IMR-90 (cell line): ENCODE measurements at regions of chr3 and their contacts with region 1.

Region 1: DNA sequence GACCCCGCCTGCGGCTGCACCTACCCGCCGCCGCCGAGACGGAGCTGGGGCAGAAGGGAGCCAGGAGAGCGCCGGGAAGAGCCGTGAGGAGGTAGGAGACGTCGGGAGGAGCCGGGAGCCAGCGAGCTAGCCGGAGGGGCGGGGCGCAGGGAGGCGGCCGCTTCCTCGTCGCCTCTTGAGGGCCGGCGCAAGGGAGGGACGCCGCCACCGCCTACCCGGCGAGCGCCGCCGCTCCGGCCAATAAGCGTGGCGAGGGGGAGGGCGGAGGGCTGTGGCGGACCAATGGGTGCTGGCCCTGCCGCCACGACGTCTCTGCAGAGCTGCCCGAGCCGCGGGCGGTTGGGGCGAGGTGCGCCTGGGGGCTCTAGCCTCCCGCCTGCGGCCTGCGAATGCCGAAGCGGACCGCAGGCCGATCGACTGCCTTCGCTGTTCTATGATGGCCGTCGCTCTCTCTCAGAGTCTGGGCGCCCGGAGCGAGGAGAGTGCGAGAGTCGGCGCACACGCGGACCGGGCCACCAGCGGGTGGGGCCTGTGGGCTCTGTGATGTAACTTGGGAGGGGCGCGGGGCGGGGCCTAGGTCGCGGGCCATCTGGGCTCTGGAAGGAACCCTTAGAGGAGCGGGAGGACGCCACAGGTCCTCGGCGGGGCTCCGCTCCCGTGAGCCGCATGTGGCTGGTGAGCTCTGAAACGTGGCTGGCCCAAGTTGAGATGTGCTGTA is 72.7 kb upstream of the MAP4 start:
- DNase-seq: peak; percentile 95
- ATAC-seq: peak; percentile 96
- H3K4me3 ChIP-seq: peak overlapping the region; percentile 84
- H3K27ac ChIP-seq: peak overlapping the region; percentile 92
- H3K4me1 ChIP-seq: 0 out of 2 replicates have a peak, but pooled peaks cover 6% of the 10 kb centered on the region
- H3K27me3 ChIP-seq: no peaks in the 10 kb centered on the region
- CTCF ChIP-seq: no peak
- POLR2A ChIP-seq: peak; percentile 95
- RAD21 ChIP-seq: peak; percentile 12; the same call in 1 of the 2 replicates

Region 2: GRCh38 chr3:48013288-48013980 is 75.5 kb before region 1 on chr3:
- CTCF ChIA-PET with region 1: interaction called, 8 read pairs
- POLR2A ChIA-PET with region 1: no interaction called
- dilution Hi-C with region 1: no loop called
- in situ Hi-C with region 1: no loop called
- intact Hi-C with region 1: loop called (anchors 1 kb)
- DNase-seq: peak; percentile 91
- ATAC-seq: peak; percentile 85
- H3K4me3 ChIP-seq: no peak overlapping the region
- H3K27ac ChIP-seq: 0 out of 2 replicates have a peak overlapping the region, but pooled peaks have one; percentile 5
- H3K4me1 ChIP-seq: peaks cover 26% of the 10 kb centered on the region
- H3K27me3 ChIP-seq: no peaks in the 10 kb centered on the region
- CTCF ChIP-seq: no peak
- POLR2A ChIP-seq: no peak
- RAD21 ChIP-seq: no peak

Region 3: DNA sequence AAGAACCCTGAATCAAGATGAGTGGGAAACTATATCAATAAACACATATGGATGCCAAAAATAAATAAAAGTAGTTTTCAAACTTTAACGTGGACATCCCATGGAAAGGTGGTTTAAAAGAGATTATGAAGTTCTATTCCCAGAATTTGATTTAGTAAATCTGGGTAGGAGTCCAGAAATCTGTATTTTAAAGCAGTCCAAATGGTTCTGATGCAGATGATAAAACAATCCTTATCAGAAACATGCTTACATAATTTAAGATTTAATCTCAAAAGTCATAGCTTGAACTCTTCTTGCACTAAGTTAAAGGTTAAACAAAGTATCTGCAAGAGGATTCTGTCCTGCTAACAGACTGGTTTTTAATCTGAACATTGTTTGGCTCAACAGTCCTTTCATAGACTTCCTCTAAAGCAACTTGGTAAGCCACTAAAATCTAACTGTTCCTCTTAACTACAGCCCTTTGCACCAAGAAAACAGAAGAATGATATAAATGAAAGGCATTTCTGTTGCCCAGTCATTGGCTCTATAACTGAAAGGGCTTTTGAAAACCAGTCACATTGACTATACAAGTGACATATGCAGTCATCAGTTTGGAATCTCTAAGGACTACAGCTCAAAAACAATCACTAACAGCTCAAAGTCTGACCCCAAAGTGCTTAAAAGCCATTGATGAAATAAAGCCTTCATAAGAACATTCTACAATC is 49.3 kb before region 1 on chr3:
- CTCF ChIA-PET with region 1: no interaction called
- POLR2A ChIA-PET with region 1: interaction called, 5 read pairs
- dilution Hi-C with region 1: no loop called
- in situ Hi-C with region 1: no loop called
- intact Hi-C with region 1: loop called (anchors 5 kb)
- DNase-seq: peak; percentile 84
- ATAC-seq: peak; percentile 77
- H3K4me3 ChIP-seq: no peak overlapping the region
- H3K27ac ChIP-seq: peak overlapping the region; percentile 94
- H3K4me1 ChIP-seq: peaks cover 20% of the 10 kb centered on the region
- H3K27me3 ChIP-seq: no peaks in the 10 kb centered on the region
- CTCF ChIP-seq: no peak
- POLR2A ChIP-seq: no peak
- RAD21 ChIP-seq: no peak

Region 4: DNA sequence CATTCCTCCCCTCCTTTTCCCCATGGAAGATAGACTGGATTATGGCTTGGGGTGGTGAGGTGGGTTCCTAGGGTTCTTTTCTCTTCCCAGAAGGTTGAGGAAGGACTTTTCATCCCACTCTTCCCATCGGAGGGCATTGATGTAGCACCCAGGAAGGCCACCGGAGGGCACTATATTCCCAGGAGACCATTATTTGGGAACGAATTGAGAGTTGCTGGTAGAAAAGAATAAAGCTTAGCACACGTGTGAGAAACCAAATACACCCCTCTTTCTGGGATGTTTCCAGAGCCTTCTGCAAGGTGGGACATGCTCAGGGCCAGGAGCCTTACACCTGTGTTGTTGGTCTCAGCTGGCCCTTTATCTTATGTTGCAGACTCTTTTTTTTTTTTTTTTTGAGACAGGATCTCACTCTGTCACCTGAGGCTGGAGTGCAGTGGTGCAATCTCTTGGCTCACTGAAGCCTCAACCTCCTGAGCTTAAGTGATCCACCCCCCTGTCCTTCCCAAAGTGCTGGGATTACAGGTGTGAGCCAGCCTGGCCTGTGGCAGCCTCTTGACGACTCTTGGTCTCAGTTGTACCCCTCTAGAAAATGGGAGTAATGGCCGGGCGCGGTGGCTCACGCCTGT is 105.7 kb after region 1 on chr3:
- CTCF ChIA-PET with region 1: no interaction called
- POLR2A ChIA-PET with region 1: no interaction called
- dilution Hi-C with region 1: no loop called
- in situ Hi-C with region 1: no loop called
- intact Hi-C with region 1: no loop called
- DNase-seq: peak; percentile 51
- ATAC-seq: peak; percentile 94
- H3K4me3 ChIP-seq: no peak overlapping the region
- H3K27ac ChIP-seq: no peak overlapping the region
- H3K4me1 ChIP-seq: no peaks in the 10 kb centered on the region
- H3K27me3 ChIP-seq: peaks cover 7% of the 10 kb centered on the region
- CTCF ChIP-seq: peak; percentile 82
- POLR2A ChIP-seq: no peak
- RAD21 ChIP-seq: peak; percentile 79